ENCODE measurements at regions of chr6 and their contacts with region 1.

Region 1: GRCh38 chr6:169789982-169790927 is 38.8 kb downstream of the ERMARD start:
- DNase-seq: peak; percentile 41 to 78 (median 65)
- ATAC-seq: peak; percentile 96
- H3K4me3 ChIP-seq: peak overlapping the region; percentile 68
- H3K4me3 Mint-ChIP-seq: peak overlapping the region; percentile 81 to 91 (median 86)
- H3K27ac ChIP-seq: peak overlapping the region; percentile 12
- H3K27ac Mint-ChIP-seq: peak overlapping the region in 4 of 9 donors; percentile 15 to 29 (median 19)
- H3K4me1 ChIP-seq: peaks cover 0 to 6% of the 10 kb centered on the region in 2 donors
- H3K4me1 Mint-ChIP-seq: peaks cover 0 to 18% (median 15%) of the 10 kb centered on the region in 7 donors
- H3K27me3 ChIP-seq: no peaks in the 10 kb centered on the region
- H3K27me3 Mint-ChIP-seq: peaks cover 26 to 47% (median 38%) of the 10 kb centered on the region in 5 donors

Region 2: GRCh38 chr6:168895102-168895812 is 895.0 kb before region 1 on chr6:
- CTCF ChIA-PET with region 1: interaction called, 4 read pairs
- POLR2A ChIA-PET with region 1: no interaction called
- intact Hi-C with region 1: loop called in 1 of 2 experiments (anchors 1 kb)
- DNase-seq: peak; percentile 57 to 76 (median 72)
- ATAC-seq: peak; percentile 94
- H3K4me3 ChIP-seq: peak overlapping the region; percentile 49
- H3K4me3 Mint-ChIP-seq: peak overlapping the region; percentile 12 to 79 (median 70)
- H3K27ac ChIP-seq: no peak overlapping the region
- H3K27ac Mint-ChIP-seq: peak overlapping the region; percentile 24 to 83 (median 71)
- H3K4me1 ChIP-seq: peaks cover 6% of the 10 kb centered on the region in 2 donors
- H3K4me1 Mint-ChIP-seq: peaks cover 7 to 24% (median 15%) of the 10 kb centered on the region in 7 donors
- H3K27me3 ChIP-seq: no peaks in the 10 kb centered on the region
- H3K27me3 Mint-ChIP-seq: peaks cover 0 to 3% (median 0%) of the 10 kb centered on the region in 5 donors

Region 3: DNA sequence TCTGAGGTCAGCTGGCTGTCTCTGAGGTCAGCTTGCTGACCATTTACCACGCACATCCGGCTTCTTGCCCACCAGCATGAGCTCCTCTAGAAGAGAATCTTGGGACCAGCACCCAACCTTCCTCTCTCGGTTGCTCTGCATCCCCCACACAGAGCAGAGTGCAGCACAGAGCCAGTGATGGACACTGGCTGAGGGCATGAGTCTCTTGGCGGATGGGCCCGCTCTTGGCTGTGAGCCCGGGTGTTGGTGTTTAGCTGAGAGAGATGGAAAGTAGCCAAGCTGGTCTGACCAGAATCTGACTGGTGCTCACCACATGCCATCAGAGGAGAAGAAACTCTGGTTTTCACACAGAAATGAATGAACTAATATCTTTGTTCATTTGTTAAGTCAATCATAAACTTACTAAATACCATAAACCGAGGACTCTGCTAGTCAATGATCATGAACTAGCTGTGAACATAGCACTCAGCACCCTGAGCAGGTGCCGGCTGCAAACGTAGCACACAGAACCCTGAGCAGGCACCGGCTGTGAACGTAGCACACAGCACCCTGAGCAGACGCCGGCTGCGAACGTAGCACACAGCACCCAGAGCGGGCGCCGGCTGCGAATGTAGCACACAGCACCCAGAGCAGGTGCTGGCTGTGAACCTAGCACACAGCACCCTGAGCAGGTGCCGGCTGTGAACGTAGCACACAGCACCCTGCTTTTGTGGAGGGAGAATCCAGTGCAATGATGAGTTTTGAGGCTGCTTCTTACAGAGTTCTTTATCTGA is 526.2 kb before region 1 on chr6:
- CTCF ChIA-PET with region 1: no interaction called
- POLR2A ChIA-PET with region 1: no interaction called
- intact Hi-C with region 1: no loop called
- DNase-seq: no peak
- ATAC-seq: no peak
- H3K4me3 ChIP-seq: no peak overlapping the region
- H3K4me3 Mint-ChIP-seq: no peak overlapping the region
- H3K27ac ChIP-seq: no peak overlapping the region
- H3K27ac Mint-ChIP-seq: no peak overlapping the region
- H3K4me1 ChIP-seq: no peaks in the 10 kb centered on the region
- H3K4me1 Mint-ChIP-seq: no peaks in the 10 kb centered on the region
- H3K27me3 ChIP-seq: no peaks in the 10 kb centered on the region
- H3K27me3 Mint-ChIP-seq: peaks cover 0 to 10% (median 3%) of the 10 kb centered on the region in 5 donors

Region 4: DNA sequence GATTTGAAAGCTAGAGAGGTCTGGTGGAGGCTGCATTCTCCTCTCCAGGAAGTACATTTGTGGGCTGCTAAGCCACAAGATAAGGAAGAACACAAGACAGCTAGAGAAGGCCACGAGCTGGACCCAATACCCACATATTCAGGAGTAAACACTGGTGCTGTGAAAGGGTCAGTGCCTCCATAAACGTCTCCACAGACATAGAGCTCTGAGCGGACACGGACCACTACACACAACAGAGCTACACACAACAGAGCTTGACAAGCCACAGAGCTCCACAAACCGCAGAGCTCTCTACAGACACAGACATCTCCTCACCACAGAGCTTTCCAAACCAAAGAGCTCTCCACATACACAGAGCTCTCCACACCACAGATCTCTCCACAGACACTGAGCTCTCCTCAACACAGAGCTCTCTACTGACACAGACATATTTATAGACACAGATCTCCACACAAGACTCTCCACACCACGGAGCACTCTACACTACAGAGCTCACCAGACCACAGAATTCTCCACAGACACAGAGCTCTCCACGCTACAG is 13.1 kb after region 1 on chr6:
- CTCF ChIA-PET with region 1: interaction called, 25 read pairs
- POLR2A ChIA-PET with region 1: interaction called, 4 read pairs
- intact Hi-C with region 1: no loop called
- DNase-seq: peak in 4 of 9 donors; percentile 11 to 20 (median 15)
- ATAC-seq: peak; percentile 7
- H3K4me3 ChIP-seq: no peak overlapping the region
- H3K4me3 Mint-ChIP-seq: peak overlapping the region in 9 of 10 donors; percentile 0 to 61 (median 41)
- H3K27ac ChIP-seq: no peak overlapping the region
- H3K27ac Mint-ChIP-seq: peak overlapping the region in 3 of 9 donors; percentile 0 to 1 (median 1)
- H3K4me1 ChIP-seq: peaks cover 25 to 41% of the 10 kb centered on the region in 2 donors
- H3K4me1 Mint-ChIP-seq: peaks cover 49 to 57% (median 52%) of the 10 kb centered on the region in 7 donors
- H3K27me3 ChIP-seq: no peaks in the 10 kb centered on the region
- H3K27me3 Mint-ChIP-seq: peaks cover 36 to 46% (median 42%) of the 10 kb centered on the region in 5 donors

Region 5: DNA sequence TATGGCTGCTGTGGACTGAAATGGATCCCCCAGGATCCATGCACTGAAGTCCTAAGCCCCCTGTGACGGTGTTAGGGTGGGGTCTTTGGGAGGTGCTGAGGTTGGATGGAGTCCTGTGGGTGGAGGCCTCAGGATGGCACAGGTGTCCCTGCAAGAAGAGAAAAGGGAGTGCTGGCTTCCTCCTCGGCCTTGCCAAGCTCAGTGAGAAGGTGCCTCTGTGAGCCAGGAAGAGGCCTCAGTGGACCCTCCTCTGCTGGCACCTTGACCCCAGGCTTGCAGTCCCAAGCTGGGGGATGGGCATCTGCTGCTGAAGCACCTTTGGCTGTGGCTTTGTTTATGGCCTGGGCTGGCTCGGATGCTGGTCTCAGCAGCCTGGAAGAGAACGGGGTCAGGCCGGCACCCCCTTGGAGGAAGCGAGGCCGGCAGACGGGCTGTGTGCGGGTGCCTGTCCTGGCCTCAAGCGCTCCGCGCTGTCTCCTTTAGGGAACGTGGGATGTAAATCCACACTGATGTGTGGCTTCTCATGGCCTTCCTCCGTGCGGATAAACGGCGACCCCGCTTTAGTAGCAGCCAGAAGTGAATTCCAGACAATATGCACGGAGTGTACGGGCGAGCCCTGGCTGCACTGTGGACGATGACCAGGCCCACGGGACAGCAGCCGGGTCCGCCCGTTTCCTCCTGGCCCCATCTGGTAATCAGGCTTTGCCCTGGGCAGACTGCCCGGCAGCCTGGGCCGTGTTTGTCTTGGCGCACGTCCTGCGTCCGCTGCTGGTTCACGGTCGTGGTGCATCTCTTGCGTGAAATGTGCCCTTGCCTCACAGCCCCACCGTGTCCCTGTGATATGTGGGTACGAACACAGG is 143.8 kb after region 1 on chr6:
- CTCF ChIA-PET with region 1: interaction called, 4 read pairs
- POLR2A ChIA-PET with region 1: no interaction called
- intact Hi-C with region 1: loop called in 1 of 2 experiments (anchors 1 kb)
- DNase-seq: no peak
- ATAC-seq: no peak
- H3K4me3 ChIP-seq: no peak overlapping the region
- H3K4me3 Mint-ChIP-seq: no peak overlapping the region
- H3K27ac ChIP-seq: no peak overlapping the region
- H3K27ac Mint-ChIP-seq: no peak overlapping the region
- H3K4me1 ChIP-seq: no peaks in the 10 kb centered on the region
- H3K4me1 Mint-ChIP-seq: no peaks in the 10 kb centered on the region
- H3K27me3 ChIP-seq: no peaks in the 10 kb centered on the region
- H3K27me3 Mint-ChIP-seq: peaks cover 0 to 23% (median 9%) of the 10 kb centered on the region in 5 donors

Region 6: GRCh38 chr6:169990095-169991030 is 200.1 kb after region 1 on chr6:
- CTCF ChIA-PET with region 1: no interaction called
- POLR2A ChIA-PET with region 1: no interaction called
- intact Hi-C with region 1: loop called in 1 of 2 experiments (anchors 1 kb)
- DNase-seq: peak in 8 of 9 donors; percentile 24 to 57 (median 49)
- ATAC-seq: peak; percentile 85
- H3K4me3 ChIP-seq: peak overlapping the region; percentile 30
- H3K4me3 Mint-ChIP-seq: peak overlapping the region; percentile 63 to 85 (median 76)
- H3K27ac ChIP-seq: peak overlapping the region; percentile 29
- H3K27ac Mint-ChIP-seq: peak overlapping the region; percentile 1 to 83 (median 78)
- H3K4me1 ChIP-seq: peaks cover 0 to 18% of the 10 kb centered on the region in 2 donors
- H3K4me1 Mint-ChIP-seq: peaks cover 22 to 29% (median 26%) of the 10 kb centered on the region in 7 donors
- H3K27me3 ChIP-seq: no peaks in the 10 kb centered on the region
- H3K27me3 Mint-ChIP-seq: no peaks in the 10 kb centered on the region

Region 7: GRCh38 chr6:170516783-170517616 is 726.7 kb after region 1 on chr6:
- CTCF ChIA-PET with region 1: interaction called, 18 read pairs
- POLR2A ChIA-PET with region 1: no interaction called
- intact Hi-C with region 1: loop called (anchors 1 kb)
- DNase-seq: peak; percentile 9 to 56 (median 45)
- ATAC-seq: peak; percentile 90
- H3K4me3 ChIP-seq: peak overlapping the region; percentile 45
- H3K4me3 Mint-ChIP-seq: peak overlapping the region in 8 of 10 donors; percentile 35 to 78 (median 60)
- H3K27ac ChIP-seq: no peak overlapping the region
- H3K27ac Mint-ChIP-seq: peak overlapping the region in 1 of 9 donors; percentile 13
- H3K4me1 ChIP-seq: peaks cover 0 to 3% of the 10 kb centered on the region in 2 donors
- H3K4me1 Mint-ChIP-seq: peaks cover 0 to 2% (median 0%) of the 10 kb centered on the region in 7 donors
- H3K27me3 ChIP-seq: no peaks in the 10 kb centered on the region
- H3K27me3 Mint-ChIP-seq: peaks cover 12 to 70% (median 40%) of the 10 kb centered on the region in 5 donors

Measured in naive thymus-derived CD4-positive, alpha-beta T cell (primary cell).